ENCODE measurements at regions of chr1 and their contacts with region 1.

Region 1: DNA sequence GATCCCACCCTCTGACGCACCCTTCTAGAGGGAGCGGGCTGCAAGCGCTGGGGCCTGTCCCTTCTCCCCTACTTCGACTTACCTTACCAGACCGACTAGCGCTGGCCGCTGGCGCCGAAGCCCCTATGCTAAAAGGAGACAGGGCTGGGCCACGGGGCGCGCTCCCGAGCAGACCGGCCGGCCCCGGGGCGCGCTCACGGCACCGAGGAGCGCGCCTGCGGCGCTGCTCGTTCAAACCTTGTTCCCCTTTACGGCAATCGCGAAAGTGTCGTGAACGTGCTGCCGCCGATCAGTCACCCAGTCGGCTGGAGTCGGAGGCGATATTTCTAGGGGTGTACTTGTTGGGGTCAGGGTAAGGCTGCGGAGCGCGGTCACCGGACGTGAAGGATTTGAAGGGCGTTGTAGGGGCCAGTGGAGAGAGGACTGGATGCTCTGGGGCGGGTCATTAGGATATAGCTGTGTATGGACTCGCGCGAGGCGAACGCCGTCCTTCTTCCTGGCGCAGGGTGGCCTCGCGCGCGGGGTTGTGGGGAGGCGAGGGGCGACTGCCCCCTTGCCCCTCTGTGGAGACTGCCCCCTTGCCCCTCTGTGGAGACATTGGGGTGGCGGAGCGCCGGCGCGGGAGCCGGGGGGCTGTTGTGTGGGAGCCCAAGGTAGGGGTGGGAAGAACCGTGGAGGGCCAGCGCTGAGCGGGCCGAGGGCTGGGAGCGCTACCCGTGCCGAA is at the starts of genes CEPT1 and DRAM2:
- DNase-seq: peak; percentile 96
- ATAC-seq: peak; percentile 87
- H3K4me3 ChIP-seq: peak within 1 kb of the TSS; percentile 77
- H3K27ac ChIP-seq: peak within 1 kb of the TSS; percentile 88
- H3K4me1 ChIP-seq: peaks cover 2% of the 10 kb centered on the region
- H3K27me3 ChIP-seq: no peaks in the 10 kb centered on the region
- CTCF ChIP-seq: no peak
- POLR2A ChIP-seq: no peak
- RAD21 ChIP-seq: no peak
- total RNA-seq, gene CEPT1: 27.4 and 42.8 TPM in 2 replicates
- total RNA-seq, gene DRAM2: 66.3 and 71.9 TPM in 2 replicates

Region 2: DNA sequence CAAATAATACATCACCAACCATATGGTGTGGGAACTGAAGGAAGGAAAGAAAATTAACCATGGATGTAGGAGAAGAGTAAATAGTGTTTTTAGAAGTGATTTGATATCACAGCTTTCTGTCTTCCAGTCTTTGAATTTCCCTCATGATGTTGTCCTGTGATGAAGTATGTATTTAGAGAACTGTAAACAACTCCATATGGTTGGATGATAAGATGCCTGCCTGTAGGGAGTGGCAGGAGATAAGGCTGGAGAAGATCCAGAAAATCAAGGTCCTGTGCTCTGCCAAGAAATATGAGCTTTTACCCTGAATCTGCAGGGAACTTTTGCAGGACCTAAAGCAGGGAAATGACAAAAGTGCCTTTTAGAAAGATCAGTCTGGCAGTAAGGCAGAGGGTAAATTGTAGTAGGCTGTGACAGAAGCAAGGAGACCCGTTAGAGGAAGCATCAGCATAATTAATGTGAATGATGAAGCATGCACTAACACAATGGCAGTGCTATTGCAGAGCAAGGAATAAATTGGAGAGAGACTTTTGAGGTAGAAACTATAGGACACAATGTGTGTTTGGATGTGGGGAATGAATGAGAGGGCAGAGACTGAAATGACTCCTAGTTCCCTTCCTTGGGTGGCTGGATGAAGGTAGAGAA is 21.8 kb after region 1 on chr1:
- CTCF ChIA-PET with region 1: interaction called, 3 read pairs
- POLR2A ChIA-PET with region 1: no interaction called
- dilution Hi-C with region 1: no loop called
- in situ Hi-C with region 1: no loop called
- intact Hi-C with region 1: loop called (anchors 2 kb)
- DNase-seq: peak; percentile 19
- ATAC-seq: peak; percentile 35
- H3K4me3 ChIP-seq: no peak overlapping the region
- H3K27ac ChIP-seq: no peak overlapping the region
- H3K4me1 ChIP-seq: no peaks in the 10 kb centered on the region
- H3K27me3 ChIP-seq: no peaks in the 10 kb centered on the region
- CTCF ChIP-seq: no peak
- POLR2A ChIP-seq: no peak
- RAD21 ChIP-seq: no peak

Region 3: GRCh38 chr1:111190651-111191451 is 50.7 kb after region 1 on chr1:
- CTCF ChIA-PET with region 1: no interaction called
- POLR2A ChIA-PET with region 1: no interaction called
- dilution Hi-C with region 1: no loop called
- in situ Hi-C with region 1: no loop called
- intact Hi-C with region 1: loop called (anchors 2 kb)
- DNase-seq: peak; percentile 61
- ATAC-seq: peak; percentile 58
- H3K4me3 ChIP-seq: no peak overlapping the region
- H3K27ac ChIP-seq: peak overlapping the region; percentile 89
- H3K4me1 ChIP-seq: peaks cover 35% of the 10 kb centered on the region
- H3K27me3 ChIP-seq: no peaks in the 10 kb centered on the region
- CTCF ChIP-seq: no peak
- POLR2A ChIP-seq: no peak
- RAD21 ChIP-seq: no peak

Region 4: DNA sequence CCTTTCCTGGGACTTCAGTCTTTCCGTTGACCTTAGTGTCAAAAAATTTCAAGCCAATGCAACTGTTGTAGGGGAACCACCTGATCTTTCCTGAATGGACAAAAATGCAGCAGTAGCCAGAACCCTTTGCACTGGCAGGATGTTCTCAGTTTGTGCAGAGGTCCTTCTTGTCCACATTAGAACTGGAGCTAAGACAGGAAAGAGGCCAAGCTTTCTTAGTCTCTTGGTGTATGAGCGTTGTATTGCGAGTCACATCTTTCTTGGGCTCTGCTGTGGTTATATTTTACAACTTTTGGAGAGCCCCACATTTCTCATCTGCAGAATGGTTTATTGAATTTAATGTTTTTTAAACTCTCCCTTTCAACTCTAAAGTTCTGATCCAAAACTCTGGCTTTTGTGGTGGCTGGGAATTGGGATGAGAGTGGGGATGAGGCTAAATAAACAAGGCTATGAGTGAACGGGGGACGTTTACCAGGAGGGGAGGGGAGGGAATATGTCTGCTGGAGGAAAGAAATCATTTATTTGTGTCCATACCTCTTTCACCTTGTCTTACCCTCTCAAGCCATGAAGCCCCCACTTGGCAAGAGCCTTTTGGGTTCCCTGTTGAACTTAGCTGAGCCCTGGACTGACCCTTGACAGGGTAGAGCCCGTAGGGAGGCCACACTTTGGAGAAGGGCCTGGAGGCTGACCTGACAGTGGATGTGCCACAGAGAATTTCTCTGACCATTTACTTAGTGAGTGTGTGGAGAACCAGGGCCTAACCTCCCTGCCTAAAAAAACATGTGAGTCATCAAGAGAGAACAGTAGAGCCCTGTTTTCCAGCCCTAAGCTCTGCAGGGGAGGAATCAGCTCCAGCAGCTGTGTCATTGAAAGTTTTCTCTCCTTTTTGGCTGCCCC is 88.0 kb after region 1 on chr1:
- CTCF ChIA-PET with region 1: no interaction called
- POLR2A ChIA-PET with region 1: no interaction called
- dilution Hi-C with region 1: no loop called
- in situ Hi-C with region 1: no loop called
- intact Hi-C with region 1: loop called (anchors 2 kb)
- DNase-seq: peak; percentile 93
- ATAC-seq: peak; percentile 97
- H3K4me3 ChIP-seq: no peak overlapping the region
- H3K27ac ChIP-seq: peak overlapping the region; percentile 66; the same call in 1 of the 2 replicates
- H3K4me1 ChIP-seq: peaks cover 12% of the 10 kb centered on the region
- H3K27me3 ChIP-seq: no peaks in the 10 kb centered on the region
- CTCF ChIP-seq: no peak
- POLR2A ChIP-seq: no peak
- RAD21 ChIP-seq: no peak

Region 5: GRCh38 chr1:111346089-111346885 is 206.2 kb after region 1 on chr1:
- CTCF ChIA-PET with region 1: no interaction called
- POLR2A ChIA-PET with region 1: no interaction called
- dilution Hi-C with region 1: no loop called
- in situ Hi-C with region 1: no loop called
- intact Hi-C with region 1: loop called (anchors 10 kb)
- DNase-seq: peak; percentile 69
- ATAC-seq: peak; percentile 99
- H3K4me3 ChIP-seq: peak overlapping the region; percentile 62
- H3K27ac ChIP-seq: peak overlapping the region; percentile 1; the same call in 1 of the 2 replicates
- H3K4me1 ChIP-seq: no peaks in the 10 kb centered on the region
- H3K27me3 ChIP-seq: peaks cover 9% of the 10 kb centered on the region
- CTCF ChIP-seq: no peak
- POLR2A ChIP-seq: no peak
- RAD21 ChIP-seq: no peak